ENCODE measurements at regions of chr6 and their contacts with region 1.

Region 1: GRCh38 chr6:31971993-31972708 is at the start of gene DXO:
- DNase-seq: peak; percentile 93
- ATAC-seq: peak; percentile 88
- H3K4me3 Mint-ChIP-seq: peak within 1 kb of the TSS; percentile 84
- H3K27ac Mint-ChIP-seq: peak within 1 kb of the TSS; percentile 99
- H3K4me1 Mint-ChIP-seq: peaks cover 12% of the 10 kb centered on the region
- H3K27me3 Mint-ChIP-seq: no peaks in the 10 kb centered on the region
- CTCF ChIP-seq: no peak
- total RNA-seq, gene DXO: 13.8 to 16.5 TPM (median 15.7 TPM) in 3 replicates

Region 2: GRCh38 chr6:31860349-31860748 is 111.8 kb before region 1 on chr6:
- CTCF ChIA-PET with region 1: no interaction called
- POLR2A ChIA-PET with region 1: no interaction called
- DNase-seq: no peak
- ATAC-seq: no peak
- H3K4me3 Mint-ChIP-seq: no peak overlapping the region
- H3K27ac Mint-ChIP-seq: no peak overlapping the region
- H3K4me1 Mint-ChIP-seq: peaks cover 19% of the 10 kb centered on the region
- H3K27me3 Mint-ChIP-seq: peaks cover 3% of the 10 kb centered on the region; the same call in 1 of the 2 replicates
- CTCF ChIP-seq: no peak

Region 3: GRCh38 chr6:31958741-31959739 is 13.1 kb before region 1 on chr6 and contains the starts of genes NELFE and SKIC2:
- CTCF ChIA-PET with region 1: interaction called, 8 read pairs
- POLR2A ChIA-PET with region 1: interaction called, 13 read pairs
- DNase-seq: peak; percentile 98
- ATAC-seq: peak; percentile 99
- H3K4me3 Mint-ChIP-seq: peak within 1 kb of the TSS; percentile 96
- H3K27ac Mint-ChIP-seq: peak within 1 kb of the TSS; percentile 95
- H3K4me1 Mint-ChIP-seq: peaks cover 14% of the 10 kb centered on the region
- H3K27me3 Mint-ChIP-seq: no peaks in the 10 kb centered on the region
- CTCF ChIP-seq: no peak
- total RNA-seq, gene NELFE: 73.8 to 88.7 TPM (median 79.0 TPM) in 3 replicates
- total RNA-seq, gene SKIC2: 80.0 to 84.0 TPM (median 81.8 TPM) in 3 replicates

Measured in WTC11 (cell line).